ENCODE measurements at regions of chr2 and their contacts with region 1.

Region 1: GRCh38 chr2:62774555-62775366 is 69.2 kb downstream of the EHBP1 start:
- DNase-seq: no peak
- ATAC-seq: peak; percentile 80
- H3K4me3 ChIP-seq: no peak overlapping the region
- H3K27ac ChIP-seq: no peak overlapping the region
- H3K4me1 ChIP-seq: no peaks in the 10 kb centered on the region
- H3K27me3 ChIP-seq: no peaks in the 10 kb centered on the region
- CTCF ChIP-seq: peak; percentile 80

Region 2: GRCh38 chr2:62456721-62457539 is 317.8 kb before region 1 on chr2:
- intact Hi-C with region 1: loop called (anchors 5 kb)
- DNase-seq: peak; percentile 87
- ATAC-seq: peak; percentile 97
- H3K4me3 ChIP-seq: peak overlapping the region; percentile 71
- H3K27ac ChIP-seq: peak overlapping the region; percentile 87
- H3K4me1 ChIP-seq: peaks cover 17% of the 10 kb centered on the region
- H3K27me3 ChIP-seq: no peaks in the 10 kb centered on the region
- CTCF ChIP-seq: peak; percentile 98

Measured in upper lobe of right lung (tissue), 1 donor.